Brain microvascular endothelial cell (primary cell): ENCODE measurements at regions of chr2 and their contacts with region 1.

Region 1: DNA sequence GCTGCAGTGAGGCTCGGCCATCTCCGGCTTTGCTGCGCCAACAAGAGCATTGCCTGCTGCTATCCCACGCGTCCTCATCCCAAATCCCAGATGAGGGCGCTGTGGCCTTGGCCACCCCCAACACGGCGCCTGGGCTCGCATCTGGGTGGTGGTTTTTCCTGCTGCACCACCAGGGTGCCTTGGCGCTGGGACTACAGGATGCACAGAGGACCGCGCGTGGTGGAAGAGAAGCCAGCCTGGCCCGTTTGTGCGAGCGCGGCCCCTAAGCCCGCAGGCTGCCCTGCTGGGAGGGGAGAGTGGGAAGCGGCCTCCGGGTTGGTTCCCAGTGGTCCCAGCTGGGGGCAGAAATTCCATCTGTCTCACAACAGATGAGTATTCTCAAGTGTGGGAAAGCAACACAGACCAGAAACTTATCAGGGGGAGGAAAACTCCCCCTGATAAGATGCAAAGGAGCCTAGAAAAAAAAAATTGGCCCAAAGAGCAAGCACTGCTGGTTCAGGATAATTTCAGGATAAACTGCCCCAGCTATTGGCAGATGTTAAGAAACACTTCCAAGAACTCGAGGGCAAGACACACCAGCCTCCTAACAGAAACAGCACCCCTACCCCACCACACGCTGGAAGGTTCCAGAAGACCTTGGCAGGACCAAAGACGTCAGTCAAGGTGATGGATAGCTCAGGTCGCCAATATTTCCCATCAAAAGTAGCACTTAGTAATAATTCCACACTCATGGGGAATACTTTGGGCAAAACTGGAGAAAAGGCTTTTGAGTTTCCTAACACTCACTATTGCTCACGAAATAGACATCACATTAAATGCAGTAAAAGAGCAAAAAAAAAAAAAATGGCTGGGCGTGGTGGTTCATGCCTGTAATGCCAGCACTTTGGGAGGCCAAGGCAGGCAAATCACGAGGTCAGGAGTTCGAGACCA is 152.1 kb downstream of the PXDN start:
- DNase-seq: peak; percentile 88
- H3K4me3 ChIP-seq: no peak overlapping the region
- H3K27ac ChIP-seq: peak overlapping the region; percentile 62
- H3K27me3 ChIP-seq: no peaks in the 10 kb centered on the region
- CTCF ChIP-seq: peak; percentile 87

Region 2: DNA sequence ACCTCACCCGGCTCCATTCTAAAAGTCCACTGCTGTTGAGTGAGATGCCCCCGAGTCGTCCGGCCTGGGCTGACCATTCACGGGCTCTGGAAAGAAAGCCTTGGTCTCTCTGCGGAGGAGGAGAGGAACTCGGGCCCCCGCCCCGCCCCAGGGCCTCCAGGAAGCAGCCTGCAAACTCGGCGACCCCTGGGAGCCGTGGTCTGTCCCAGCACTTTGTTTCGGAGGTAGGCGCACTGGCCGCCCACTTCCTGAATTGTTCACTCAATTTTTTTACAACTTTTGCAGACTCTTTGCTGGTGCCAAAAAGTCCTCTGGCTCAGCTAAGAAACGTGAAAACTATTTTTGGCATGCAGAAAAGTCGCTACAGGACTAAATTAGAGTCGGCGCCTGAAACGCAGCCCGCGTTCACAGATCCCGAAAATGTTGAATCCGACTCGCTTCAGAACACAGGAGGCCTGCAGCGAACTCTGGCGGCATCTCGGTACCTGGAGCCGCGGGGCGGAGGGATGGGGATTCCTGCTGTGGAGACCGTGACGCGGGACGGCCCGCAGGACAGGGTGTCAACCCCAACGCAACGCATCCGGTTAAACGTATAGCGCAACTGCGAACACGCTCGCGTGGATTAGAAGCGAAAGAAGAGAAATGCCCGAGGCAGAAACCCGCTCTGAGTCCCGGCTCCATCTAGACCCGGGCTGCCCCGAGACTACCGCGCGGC is 150.6 kb after region 1 on chr2:
- in situ Hi-C with region 1: loop called (anchors 25 kb)
- DNase-seq: peak; percentile 94
- H3K4me3 ChIP-seq: peak overlapping the region; percentile 84
- H3K27ac ChIP-seq: peak overlapping the region; percentile 93
- H3K27me3 ChIP-seq: no peaks in the 10 kb centered on the region
- CTCF ChIP-seq: peak; percentile 79